ENCODE measurements at regions of chr1 and their contacts with region 1.

Region 1: DNA sequence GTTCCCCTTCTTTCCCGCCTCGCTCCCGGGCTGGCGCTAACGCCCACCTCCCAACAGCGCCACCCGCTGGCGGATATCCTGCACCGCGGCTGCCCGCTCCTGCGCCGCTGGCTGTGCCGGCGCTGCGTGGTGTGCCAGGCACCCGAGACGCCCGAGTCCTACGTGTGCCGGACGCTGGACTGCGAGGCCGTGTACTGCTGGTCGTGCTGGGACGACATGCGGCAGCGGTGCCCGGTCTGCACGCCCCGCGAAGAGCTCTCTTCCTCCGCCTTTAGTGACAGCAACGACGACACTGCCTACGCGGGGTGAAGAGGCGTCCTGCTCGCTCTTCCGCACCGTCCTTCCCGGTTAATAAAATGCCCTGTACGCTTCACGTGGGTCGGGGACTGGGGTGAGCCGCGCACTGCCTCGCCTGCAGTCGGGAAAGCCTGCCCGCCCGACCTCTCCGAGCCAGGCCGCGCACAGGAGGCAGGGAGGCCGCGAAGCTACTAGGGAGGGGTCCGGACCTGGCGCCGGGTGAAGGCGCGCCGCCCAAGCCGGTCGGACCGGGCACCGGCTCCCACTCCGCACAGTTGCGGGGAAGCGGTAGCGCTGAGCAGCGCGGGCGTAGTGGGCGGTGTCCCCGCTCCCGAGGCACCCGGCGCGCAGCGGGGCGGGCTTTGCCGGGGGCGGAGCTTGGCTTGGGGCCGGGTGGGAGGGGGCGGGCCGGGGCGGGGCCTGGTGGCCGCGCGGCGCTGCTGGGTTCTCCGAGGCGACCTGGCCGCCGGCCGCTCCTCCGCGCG is at the start of gene ADAM15:
- DNase-seq: peak; percentile 84
- H3K4me3 Mint-ChIP-seq: peak within 1 kb of the TSS; percentile 90
- H3K27ac Mint-ChIP-seq: peak within 1 kb of the TSS; percentile 80
- H3K4me1 Mint-ChIP-seq: peaks cover 33% of the 10 kb centered on the region
- H3K27me3 Mint-ChIP-seq: no peaks in the 10 kb centered on the region
- CTCF ChIP-seq: peak; percentile 99
- total RNA-seq, gene ADAM15: 385 and 456 TPM in 2 replicates

Region 2: GRCh38 chr1:154955718-154956543 is 94.8 kb before region 1 on chr1 and contains the start of gene PBXIP1:
- CTCF ChIA-PET with region 1: interaction called, 10 read pairs
- POLR2A ChIA-PET with region 1: interaction called, 18 read pairs
- intact Hi-C with region 1: no loop called
- DNase-seq: peak; percentile 97
- H3K4me3 Mint-ChIP-seq: peak within 1 kb of the TSS; percentile 88
- H3K27ac Mint-ChIP-seq: peak within 1 kb of the TSS; percentile 68
- H3K4me1 Mint-ChIP-seq: peaks cover 43% of the 10 kb centered on the region
- H3K27me3 Mint-ChIP-seq: no peaks in the 10 kb centered on the region
- CTCF ChIP-seq: peak; percentile 24
- total RNA-seq, gene PBXIP1: 11.3 TPM in 2 replicates

Region 3: GRCh38 chr1:154992721-154993571 is 57.8 kb before region 1 on chr1:
- CTCF ChIA-PET with region 1: interaction called, 22 read pairs
- POLR2A ChIA-PET with region 1: interaction called, 5 read pairs
- intact Hi-C with region 1: no loop called
- DNase-seq: no peak
- H3K4me3 Mint-ChIP-seq: no peak overlapping the region
- H3K27ac Mint-ChIP-seq: peak overlapping the region; percentile 50
- H3K4me1 Mint-ChIP-seq: peaks cover 32% of the 10 kb centered on the region
- H3K27me3 Mint-ChIP-seq: no peaks in the 10 kb centered on the region
- CTCF ChIP-seq: no peak

Region 4: DNA sequence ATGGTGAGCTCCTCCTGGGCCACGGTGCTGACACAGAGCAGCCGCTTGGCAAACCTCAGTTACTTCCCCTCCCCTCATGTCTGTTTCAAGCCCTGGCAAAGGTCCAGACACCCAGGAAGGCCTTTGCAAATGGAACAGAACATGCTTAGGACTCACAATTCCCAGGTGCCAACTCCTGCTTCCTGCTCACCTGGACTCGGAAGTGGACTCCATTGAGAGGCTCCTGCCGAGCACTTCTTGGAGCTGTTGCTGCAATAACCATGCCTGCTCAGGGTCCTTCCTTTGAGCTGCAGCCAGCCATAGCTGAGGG is 27.9 kb before region 1 on chr1:
- CTCF ChIA-PET with region 1: interaction called, 390 read pairs
- POLR2A ChIA-PET with region 1: interaction called, 56 read pairs
- intact Hi-C with region 1: no loop called
- DNase-seq: peak; percentile 85
- H3K4me3 Mint-ChIP-seq: peak overlapping the region; percentile 3
- H3K27ac Mint-ChIP-seq: peak overlapping the region; percentile 52
- H3K4me1 Mint-ChIP-seq: peaks cover 63% of the 10 kb centered on the region
- H3K27me3 Mint-ChIP-seq: no peaks in the 10 kb centered on the region
- CTCF ChIP-seq: no peak

Region 5: GRCh38 chr1:155073361-155074242 is 22.9 kb after region 1 on chr1:
- CTCF ChIA-PET with region 1: interaction called, 231 read pairs
- POLR2A ChIA-PET with region 1: interaction called, 15 read pairs
- intact Hi-C with region 1: no loop called
- DNase-seq: no peak
- H3K4me3 Mint-ChIP-seq: no peak overlapping the region
- H3K27ac Mint-ChIP-seq: no peak overlapping the region
- H3K4me1 Mint-ChIP-seq: peaks cover 18% of the 10 kb centered on the region
- H3K27me3 Mint-ChIP-seq: no peaks in the 10 kb centered on the region
- CTCF ChIP-seq: no peak